T-cell (primary cell): ENCODE measurements at regions of chr10 and their contacts with region 1.

Region 1: DNA sequence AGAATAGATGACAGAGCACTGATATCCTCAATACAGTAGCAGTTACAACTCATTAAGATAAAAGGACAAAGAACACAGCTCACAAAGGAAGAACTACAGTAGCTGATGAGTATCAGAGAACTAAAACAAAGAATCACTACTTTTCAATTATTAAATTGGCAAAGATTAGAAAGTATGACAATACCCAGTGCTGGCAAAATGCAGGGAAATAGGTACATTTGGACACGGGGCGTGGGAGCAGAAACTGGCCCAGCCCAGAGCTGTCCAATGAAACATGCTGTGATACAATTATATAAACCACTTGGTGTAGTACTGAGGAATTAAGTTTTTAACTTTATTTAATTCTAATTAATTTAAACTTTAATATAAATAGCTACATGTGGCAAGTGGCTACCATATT is 226.3 kb downstream of the MLLT10 start:
- DNase-seq: no peak
- ATAC-seq: no peak
- H3K4me3 ChIP-seq: no peak overlapping the region
- H3K4me3 Mint-ChIP-seq: no peak overlapping the region
- H3K27ac ChIP-seq: no peak overlapping the region
- H3K27ac Mint-ChIP-seq: no peak overlapping the region
- H3K4me1 ChIP-seq: peaks cover 8 to 10% of the 10 kb centered on the region in 2 experiments
- H3K4me1 Mint-ChIP-seq: peaks cover 15 to 19% (median 15%) of the 10 kb centered on the region in 3 donors
- H3K27me3 ChIP-seq: no peaks in the 10 kb centered on the region
- H3K27me3 Mint-ChIP-seq: no peaks in the 10 kb centered on the region

Region 2: GRCh38 chr10:21638681-21639080 is 121.7 kb before region 1 on chr10:
- CTCF ChIA-PET with region 1: no interaction called
- POLR2A ChIA-PET with region 1: no interaction called
- DNase-seq: no peak
- ATAC-seq: no peak
- H3K4me3 ChIP-seq: no peak overlapping the region
- H3K4me3 Mint-ChIP-seq: no peak overlapping the region
- H3K27ac ChIP-seq: no peak overlapping the region
- H3K27ac Mint-ChIP-seq: no peak overlapping the region
- H3K4me1 ChIP-seq: no peaks in the 10 kb centered on the region
- H3K4me1 Mint-ChIP-seq: peaks cover 30 to 43% (median 32%) of the 10 kb centered on the region in 3 donors
- H3K27me3 ChIP-seq: no peaks in the 10 kb centered on the region
- H3K27me3 Mint-ChIP-seq: no peaks in the 10 kb centered on the region

Region 3: DNA sequence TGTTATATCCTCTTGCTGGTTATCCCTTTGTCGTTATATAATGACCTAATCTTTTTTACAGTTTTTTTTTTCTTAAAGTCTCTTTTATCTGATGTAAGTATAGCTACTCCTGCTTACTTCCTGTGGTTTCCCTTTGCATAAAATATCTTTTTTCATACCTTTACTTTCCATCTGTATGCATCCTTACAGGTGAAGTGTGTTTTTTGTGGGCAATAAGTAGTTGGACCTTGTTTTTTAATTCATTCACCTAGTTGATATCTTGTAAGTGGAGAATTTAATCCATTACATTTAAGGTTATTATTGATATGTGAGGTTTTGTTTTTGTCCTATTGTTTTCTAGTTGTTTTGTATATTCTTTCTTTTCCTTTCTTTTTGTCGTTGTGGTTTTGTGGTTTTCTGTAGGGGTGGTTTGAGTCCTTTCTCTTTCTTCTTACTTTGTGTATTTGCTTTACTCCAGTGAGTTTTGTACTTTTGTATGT is 57.7 kb before region 1 on chr10:
- CTCF ChIA-PET with region 1: no interaction called
- POLR2A ChIA-PET with region 1: no interaction called
- DNase-seq: peak in 1 of 35 experiments; percentile 51
- ATAC-seq: peak; percentile 77 to 93 (median 80)
- H3K4me3 ChIP-seq: no peak overlapping the region
- H3K4me3 Mint-ChIP-seq: peak overlapping the region; percentile 53 to 60 (median 58)
- H3K27ac ChIP-seq: peak overlapping the region; percentile 13
- H3K27ac Mint-ChIP-seq: peak overlapping the region; percentile 72 to 74
- H3K4me1 ChIP-seq: peaks cover 13 to 24% of the 10 kb centered on the region in 2 experiments
- H3K4me1 Mint-ChIP-seq: peaks cover 31 to 36% (median 33%) of the 10 kb centered on the region in 3 donors
- H3K27me3 ChIP-seq: no peaks in the 10 kb centered on the region
- H3K27me3 Mint-ChIP-seq: no peaks in the 10 kb centered on the region

Region 4: GRCh38 chr10:21791276-21791675 is 30.9 kb after region 1 on chr10:
- CTCF ChIA-PET with region 1: no interaction called
- POLR2A ChIA-PET with region 1: interaction called in 1 of 2 experiments, 10 read pairs
- DNase-seq: no peak
- ATAC-seq: no peak
- H3K4me3 ChIP-seq: no peak overlapping the region
- H3K4me3 Mint-ChIP-seq: no peak overlapping the region
- H3K27ac ChIP-seq: no peak overlapping the region
- H3K27ac Mint-ChIP-seq: no peak overlapping the region
- H3K4me1 ChIP-seq: no peaks in the 10 kb centered on the region
- H3K4me1 Mint-ChIP-seq: peaks cover 0 to 5% (median 4%) of the 10 kb centered on the region in 3 donors
- H3K27me3 ChIP-seq: no peaks in the 10 kb centered on the region
- H3K27me3 Mint-ChIP-seq: no peaks in the 10 kb centered on the region